Activated CD8-positive, alpha-beta T cell treated with anti-CD3 and anti-CD28 coated beads, Interleukin-2, amount 10 ng/mL, durations not matched to agents 7 days and 5 days (primary cell): ENCODE measurements at regions of chr1 and their contacts with region 1.

Region 1: GRCh38 chr1:67766141-67766978 is 66.9 kb downstream of the GNG12 start:
- DNase-seq: peak; percentile 58
- ATAC-seq: peak; percentile 60
- H3K4me3 Mint-ChIP-seq: peak overlapping the region; percentile 40
- H3K27ac Mint-ChIP-seq: no peak overlapping the region
- H3K4me1 Mint-ChIP-seq: peaks cover 8% of the 10 kb centered on the region
- H3K27me3 Mint-ChIP-seq: peaks cover 31% of the 10 kb centered on the region

Region 2: DNA sequence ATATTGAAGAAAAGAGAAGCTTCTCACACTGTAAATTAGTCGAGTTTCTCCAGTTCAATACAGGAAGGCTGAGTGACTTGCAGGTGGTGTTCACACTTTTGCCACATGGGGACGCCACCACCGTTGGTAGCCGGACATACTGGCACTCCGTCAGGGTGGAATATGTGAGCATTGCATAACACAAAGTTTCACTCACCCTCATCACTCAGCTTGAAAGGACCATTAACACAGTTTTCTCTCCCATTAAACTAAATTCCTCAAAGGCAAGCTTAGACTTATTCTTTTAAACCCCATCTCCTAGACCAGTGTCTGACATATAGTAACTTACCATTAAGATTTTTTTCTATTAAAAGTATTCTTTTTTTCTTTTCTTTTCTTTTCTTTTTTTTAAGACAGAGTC is 230.9 kb before region 1 on chr1:
- CTCF ChIA-PET with region 1: interaction called, 12 read pairs
- POLR2A ChIA-PET with region 1: no interaction called
- DNase-seq: peak; percentile 70
- ATAC-seq: peak; percentile 59
- H3K4me3 Mint-ChIP-seq: no peak overlapping the region
- H3K27ac Mint-ChIP-seq: no peak overlapping the region
- H3K4me1 Mint-ChIP-seq: peaks cover 13% of the 10 kb centered on the region
- H3K27me3 Mint-ChIP-seq: peaks cover 5% of the 10 kb centered on the region

Region 3: GRCh38 chr1:67752306-67752705 is 14.1 kb before region 1 on chr1:
- CTCF ChIA-PET with region 1: interaction called, 10 read pairs
- POLR2A ChIA-PET with region 1: no interaction called
- DNase-seq: no peak
- ATAC-seq: no peak
- H3K4me3 Mint-ChIP-seq: no peak overlapping the region
- H3K27ac Mint-ChIP-seq: no peak overlapping the region
- H3K4me1 Mint-ChIP-seq: peaks cover 25% of the 10 kb centered on the region
- H3K27me3 Mint-ChIP-seq: peaks cover 11% of the 10 kb centered on the region

Region 4: GRCh38 chr1:67821263-67821662 is 54.9 kb after region 1 on chr1:
- CTCF ChIA-PET with region 1: no interaction called
- POLR2A ChIA-PET with region 1: no interaction called
- DNase-seq: no peak
- ATAC-seq: no peak
- H3K4me3 Mint-ChIP-seq: no peak overlapping the region
- H3K27ac Mint-ChIP-seq: no peak overlapping the region
- H3K4me1 Mint-ChIP-seq: no peaks in the 10 kb centered on the region
- H3K27me3 Mint-ChIP-seq: peaks cover 26% of the 10 kb centered on the region

Region 5: DNA sequence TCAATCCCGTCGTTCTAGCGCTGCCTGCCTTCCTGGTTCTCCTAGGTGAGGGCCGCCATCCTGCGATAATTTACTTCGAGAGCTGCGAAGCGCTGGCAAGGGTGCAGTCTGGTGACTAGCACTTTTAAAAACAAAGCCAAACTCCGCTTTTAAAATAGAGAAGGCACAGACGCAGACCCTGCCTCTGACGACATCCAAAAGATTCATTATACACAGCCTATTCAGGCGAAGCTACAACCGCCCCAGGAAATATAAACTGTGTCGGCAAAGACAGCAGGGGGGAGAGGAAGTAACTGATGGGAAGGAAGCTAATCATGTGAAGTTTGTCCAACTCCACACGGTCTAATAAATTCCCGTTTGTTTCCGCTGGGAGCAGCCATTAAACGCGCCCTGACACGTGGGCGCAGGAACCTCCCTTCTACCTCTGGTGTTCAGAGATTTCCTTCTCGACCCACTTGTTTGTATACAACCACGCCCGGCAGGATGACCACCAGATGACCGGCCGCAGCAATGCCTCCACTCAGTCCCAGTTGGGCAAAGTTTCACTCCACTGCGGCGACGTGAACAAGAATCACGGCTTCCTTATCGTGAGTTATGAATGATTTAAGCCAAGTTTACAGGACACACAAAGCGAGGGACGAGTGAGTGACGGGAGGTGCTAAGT is 65.6 kb after region 1 on chr1:
- CTCF ChIA-PET with region 1: interaction called, 12 read pairs
- POLR2A ChIA-PET with region 1: no interaction called
- DNase-seq: no peak
- ATAC-seq: no peak
- H3K4me3 Mint-ChIP-seq: peak overlapping the region; percentile 60
- H3K27ac Mint-ChIP-seq: no peak overlapping the region
- H3K4me1 Mint-ChIP-seq: peaks cover 26% of the 10 kb centered on the region
- H3K27me3 Mint-ChIP-seq: peaks cover 53% of the 10 kb centered on the region

Region 6: GRCh38 chr1:67850151-67850551 is 83.8 kb after region 1 on chr1:
- CTCF ChIA-PET with region 1: interaction called, 15 read pairs
- POLR2A ChIA-PET with region 1: no interaction called
- DNase-seq: peak; percentile 28
- ATAC-seq: peak; percentile 19
- H3K4me3 Mint-ChIP-seq: no peak overlapping the region
- H3K27ac Mint-ChIP-seq: no peak overlapping the region
- H3K4me1 Mint-ChIP-seq: no peaks in the 10 kb centered on the region
- H3K27me3 Mint-ChIP-seq: peaks cover 3% of the 10 kb centered on the region